ENCODE measurements at regions of chr1 and their contacts with region 1.

Region 1: DNA sequence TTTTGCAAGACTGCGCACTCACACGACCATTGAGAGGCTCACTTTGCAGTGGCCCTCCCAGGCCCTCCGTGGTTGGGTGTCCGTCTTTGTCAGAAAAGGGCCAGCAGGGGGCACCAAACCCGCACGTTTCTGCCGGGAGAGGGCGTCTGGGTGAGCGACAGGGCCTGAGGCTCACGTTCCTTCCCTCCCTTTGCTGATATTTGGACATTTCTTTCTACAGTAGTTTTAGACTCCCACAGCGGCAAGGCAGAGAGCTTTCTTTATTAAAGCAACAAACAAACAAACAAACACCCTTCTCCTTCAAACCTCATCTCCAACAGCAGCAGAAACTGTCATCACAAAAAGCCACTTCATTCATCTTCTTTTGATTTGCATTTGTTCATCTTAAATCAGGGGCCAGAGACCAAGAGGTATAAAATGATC is 79.2 kb upstream of the WDR26 start:
- DNase-seq: peak; percentile 76 to 90
- ATAC-seq: peak; percentile 99 to 100
- H3K4me3 ChIP-seq: no peak overlapping the region
- H3K27ac ChIP-seq: no peak overlapping the region
- H3K4me1 ChIP-seq: no peaks in the 10 kb centered on the region
- CTCF ChIP-seq: peak; percentile 96
- EP300 ChIP-seq: no peak
- POLR2A ChIP-seq: no peak
- RAD21 ChIP-seq: peak; percentile 94 to 95

Region 2: DNA sequence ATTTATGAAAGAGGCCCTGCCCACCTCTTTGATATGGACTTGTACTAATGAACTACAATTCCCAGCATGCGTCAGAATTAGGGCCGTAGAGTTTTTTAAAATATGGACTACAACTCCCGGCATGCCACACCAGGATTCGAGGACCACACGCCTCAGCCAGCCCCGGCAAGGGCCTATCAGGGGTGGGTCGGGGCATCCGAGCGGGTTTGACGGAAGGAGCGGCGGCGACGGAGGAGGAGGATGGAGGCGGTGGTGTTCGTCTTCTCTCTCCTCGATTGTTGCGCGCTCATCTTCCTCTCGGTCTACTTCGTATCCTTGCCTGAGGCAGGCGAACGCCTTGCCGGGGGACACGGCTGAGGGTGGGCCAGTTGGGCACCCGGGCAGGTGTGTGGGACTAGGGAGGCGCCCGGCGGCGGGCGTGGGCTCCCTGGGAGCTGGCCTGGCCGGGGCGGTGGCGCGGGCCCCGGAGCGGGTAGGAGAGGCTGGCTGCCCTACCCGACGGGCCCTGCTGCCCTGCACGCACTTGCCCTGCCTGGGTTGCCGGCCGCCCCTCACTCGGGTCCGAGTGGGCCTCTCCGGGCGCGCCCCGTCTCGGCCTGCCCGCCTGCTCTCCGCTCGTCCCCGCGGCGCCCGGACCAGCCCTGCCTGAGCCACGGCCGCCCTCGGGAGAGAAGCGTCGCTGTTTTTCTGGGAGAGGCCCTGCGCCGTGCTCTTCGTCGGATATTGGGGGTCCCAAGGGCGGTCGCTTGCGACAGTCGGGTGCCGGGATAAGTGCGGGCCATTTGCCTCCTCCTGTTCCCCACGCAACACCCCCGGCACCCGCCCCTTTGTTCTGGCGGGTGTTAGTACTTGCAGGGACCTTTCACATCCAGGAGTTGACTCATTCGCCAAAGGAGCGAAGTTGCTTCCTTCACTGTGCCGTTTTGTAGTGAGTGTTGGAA is 156.8 kb before region 1 on chr1 and contains the start of gene CNIH4:
- CTCF ChIA-PET with region 1: no interaction called
- POLR2A ChIA-PET with region 1: no interaction called
- DNase-seq: peak; percentile 94 to 96
- ATAC-seq: peak; percentile 98 to 99
- H3K4me3 ChIP-seq: peak within 1 kb of the TSS; percentile 62
- H3K27ac ChIP-seq: peak within 1 kb of the TSS; percentile 85 to 96
- H3K4me1 ChIP-seq: peaks cover 20% of the 10 kb centered on the region
- CTCF ChIP-seq: no peak
- EP300 ChIP-seq: no peak
- POLR2A ChIP-seq: peak; percentile 92
- RAD21 ChIP-seq: no peak
- polyA plus RNA-seq, gene CNIH4: 102 and 124 TPM in 2 replicates

Region 3: GRCh38 chr1:224497714-224498573 is 15.9 kb before region 1 on chr1:
- CTCF ChIA-PET with region 1: interaction called, 41 read pairs
- POLR2A ChIA-PET with region 1: no interaction called
- DNase-seq: peak in 1 of 2 experiments; percentile 14
- ATAC-seq: peak in 1 of 2 experiments; percentile 55; a peak in 4 of 6 replicates
- H3K4me3 ChIP-seq: no peak overlapping the region
- H3K27ac ChIP-seq: peak overlapping the region in 1 of 2 experiments; percentile 43; a peak in 2 of 6 replicates
- H3K4me1 ChIP-seq: peaks cover 2% of the 10 kb centered on the region
- CTCF ChIP-seq: no peak
- EP300 ChIP-seq: no peak
- POLR2A ChIP-seq: no peak
- RAD21 ChIP-seq: no peak

Region 4: DNA sequence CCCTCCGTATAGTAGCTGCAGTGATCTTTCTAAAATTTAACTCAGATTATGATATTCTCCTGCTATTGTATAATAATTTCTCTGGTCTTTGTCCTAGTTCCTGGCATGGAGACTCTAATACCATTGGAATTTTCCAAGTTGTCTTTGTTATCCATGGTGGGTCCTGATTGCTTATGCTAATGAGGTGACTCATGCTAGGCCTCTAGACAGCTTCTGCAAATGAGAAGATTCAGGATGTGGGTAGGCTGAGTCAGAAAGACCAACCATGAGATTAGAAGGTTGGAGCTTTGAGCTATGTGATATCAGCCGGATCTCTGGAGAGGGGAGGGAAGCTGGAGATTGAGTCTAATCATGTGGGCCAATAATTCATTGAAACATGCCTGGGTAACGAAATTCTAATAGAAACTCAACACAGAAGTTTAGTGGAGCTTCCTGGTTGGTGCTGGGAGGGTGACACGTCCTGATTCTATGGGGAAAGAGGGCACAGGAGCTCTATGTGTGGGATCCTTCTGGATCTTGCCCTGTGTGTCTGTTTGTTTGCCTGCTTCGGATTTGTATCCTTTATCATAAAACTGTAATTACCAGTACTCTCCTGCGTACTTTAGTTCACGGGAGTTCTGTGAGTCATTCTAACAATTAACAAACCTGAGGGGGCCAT is 29.1 kb after region 1 on chr1:
- CTCF ChIA-PET with region 1: interaction called, 21 read pairs
- POLR2A ChIA-PET with region 1: no interaction called
- DNase-seq: peak in 1 of 2 experiments; percentile 28
- ATAC-seq: peak in 1 of 2 experiments; percentile 61; a peak in 5 of 6 replicates
- H3K4me3 ChIP-seq: no peak overlapping the region
- H3K27ac ChIP-seq: no peak overlapping the region
- H3K4me1 ChIP-seq: peaks cover 6% of the 10 kb centered on the region; the same call in 2 of the 3 replicates
- CTCF ChIP-seq: no peak
- EP300 ChIP-seq: no peak
- POLR2A ChIP-seq: no peak
- RAD21 ChIP-seq: no peak

Region 5: DNA sequence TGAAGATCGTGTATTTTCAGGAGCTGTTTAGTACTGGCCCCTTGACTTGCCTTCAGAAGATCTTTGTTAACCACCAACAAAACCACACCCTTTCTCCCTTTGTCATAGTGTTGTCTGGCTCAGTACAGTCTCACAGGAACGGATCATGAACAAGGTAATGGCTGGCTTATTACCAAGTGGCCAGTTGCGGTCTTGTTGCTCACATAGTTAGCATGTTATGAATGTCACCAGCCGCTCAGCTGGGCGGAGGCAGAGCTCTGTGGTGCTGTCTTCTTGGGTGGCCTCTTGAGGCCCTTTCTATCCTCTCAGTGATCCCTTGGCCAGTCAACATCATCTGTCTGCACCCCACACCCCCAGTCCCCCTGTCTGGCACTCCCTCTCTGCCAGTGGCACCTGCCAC is 123.7 kb after region 1 on chr1:
- CTCF ChIA-PET with region 1: interaction called, 126 read pairs
- POLR2A ChIA-PET with region 1: no interaction called
- DNase-seq: peak in 1 of 2 experiments; percentile 20
- ATAC-seq: peak in 1 of 2 experiments; percentile 24; a peak in 3 of 6 replicates
- H3K4me3 ChIP-seq: no peak overlapping the region
- H3K27ac ChIP-seq: no peak overlapping the region
- H3K4me1 ChIP-seq: no peaks in the 10 kb centered on the region
- CTCF ChIP-seq: no peak
- EP300 ChIP-seq: no peak
- POLR2A ChIP-seq: no peak
- RAD21 ChIP-seq: no peak

Region 6: GRCh38 chr1:224856973-224857372 is 343.2 kb after region 1 on chr1:
- CTCF ChIA-PET with region 1: interaction called, 60 read pairs
- POLR2A ChIA-PET with region 1: no interaction called
- DNase-seq: no peak
- ATAC-seq: no peak
- H3K4me3 ChIP-seq: no peak overlapping the region
- H3K27ac ChIP-seq: no peak overlapping the region
- H3K4me1 ChIP-seq: no peaks in the 10 kb centered on the region
- CTCF ChIP-seq: no peak
- EP300 ChIP-seq: no peak
- POLR2A ChIP-seq: no peak
- RAD21 ChIP-seq: no peak

Region 7: GRCh38 chr1:224922404-224923164 is 408.8 kb after region 1 on chr1:
- CTCF ChIA-PET with region 1: interaction called, 121 read pairs
- POLR2A ChIA-PET with region 1: no interaction called
- DNase-seq: peak; percentile 48 to 57
- ATAC-seq: peak; percentile 92 to 93
- H3K4me3 ChIP-seq: no peak overlapping the region
- H3K27ac ChIP-seq: no peak overlapping the region
- H3K4me1 ChIP-seq: no peaks in the 10 kb centered on the region
- CTCF ChIP-seq: peak; percentile 78
- EP300 ChIP-seq: no peak
- POLR2A ChIP-seq: no peak
- RAD21 ChIP-seq: peak; percentile 79 to 86

Measured in A549 (cell line).